Ovary (tissue), 10 donors: ENCODE measurements at regions of chr1 and their contacts with region 1.

Region 1: DNA sequence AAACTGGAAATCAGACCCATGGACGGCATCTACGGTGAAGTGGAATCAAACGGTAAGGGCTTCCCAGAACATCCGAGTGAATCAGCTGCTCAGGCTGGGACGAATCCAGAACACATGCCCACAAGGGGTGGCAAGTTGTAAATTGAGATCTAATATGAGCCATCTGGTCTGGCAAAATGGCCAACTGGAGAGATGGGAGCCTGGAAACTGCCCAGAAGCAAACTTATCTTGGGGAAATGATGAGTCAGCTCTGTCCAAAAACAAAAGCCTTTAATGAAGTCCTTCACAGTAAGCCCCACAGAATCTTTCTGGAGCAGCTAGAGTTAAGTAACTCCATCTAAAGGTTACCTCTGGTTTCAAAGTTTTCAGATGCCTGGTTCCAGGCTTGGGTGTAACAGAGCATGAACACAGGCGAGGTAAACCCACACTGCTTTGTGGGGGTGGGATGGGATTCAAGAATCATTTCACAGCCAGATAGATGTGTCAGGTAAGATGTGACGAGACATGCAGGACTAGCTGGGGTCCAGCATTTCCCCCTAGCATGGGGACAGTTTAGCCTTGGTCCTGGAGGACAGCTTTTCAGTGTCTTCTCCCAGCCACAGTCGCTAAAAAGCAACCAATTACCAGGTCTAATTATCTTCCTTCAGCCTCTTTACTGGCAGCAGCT is 10.5 kb upstream of the SRP9 start:
- DNase-seq: peak; percentile 71 to 77 (median 74)
- H3K4me3 ChIP-seq: no peak overlapping the region
- H3K27ac ChIP-seq: peak overlapping the region in 1 of 2 donors; percentile 85
- H3K4me1 ChIP-seq: peaks cover 43% of the 10 kb centered on the region
- H3K27me3 ChIP-seq: no peaks in the 10 kb centered on the region
- CTCF ChIP-seq: no peak
- EP300 ChIP-seq: no peak
- POLR2A ChIP-seq: no peak

Region 2: GRCh38 chr1:225561675-225562074 is 205.4 kb before region 1 on chr1:
- intact Hi-C with region 1: loop called in 1 of 4 experiments (anchors 5 kb)
- DNase-seq: no peak
- H3K4me3 ChIP-seq: no peak overlapping the region
- H3K27ac ChIP-seq: no peak overlapping the region
- H3K4me1 ChIP-seq: peaks cover 2% of the 10 kb centered on the region
- H3K27me3 ChIP-seq: no peaks in the 10 kb centered on the region
- CTCF ChIP-seq: no peak
- EP300 ChIP-seq: no peak
- POLR2A ChIP-seq: no peak